ENCODE measurements at regions of chr15 and their contacts with region 1.

Region 1: DNA sequence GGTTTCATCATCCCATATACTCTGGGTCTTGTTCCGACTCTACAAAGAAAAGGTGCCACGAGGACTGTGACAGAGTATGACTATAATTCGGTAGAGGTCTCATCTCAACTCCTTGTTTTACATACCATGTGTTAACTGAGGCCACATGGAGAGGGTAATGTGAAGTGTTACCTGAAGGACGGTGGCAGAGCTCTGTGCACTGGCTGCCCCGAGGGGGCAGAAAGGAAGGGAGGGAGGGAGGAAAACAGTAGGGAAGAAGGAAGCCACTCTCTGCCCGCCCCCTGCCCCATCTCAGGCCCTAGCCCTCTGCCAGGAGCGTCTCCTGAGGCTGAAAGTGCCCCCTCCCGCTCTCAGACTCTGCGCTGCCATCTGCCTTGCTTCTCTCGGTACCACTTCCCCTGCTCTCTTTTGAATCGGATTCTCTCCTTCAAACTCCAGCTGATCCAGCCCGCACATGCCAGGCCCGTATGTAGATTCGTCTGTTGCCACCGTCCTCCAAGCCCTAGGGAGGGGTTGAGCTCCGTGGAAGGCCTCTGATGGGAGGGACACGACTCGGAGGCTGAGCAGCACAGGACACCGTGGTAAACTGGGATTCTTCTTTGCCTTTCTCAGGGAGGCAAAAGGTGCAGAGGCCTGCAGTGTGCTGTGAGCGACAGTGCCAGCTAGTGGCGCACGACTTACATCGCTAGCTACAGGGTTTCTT is 70.5 kb upstream of the ATP10A start:
- DNase-seq: peak; percentile 64 to 88 (median 77)
- H3K4me3 ChIP-seq: peak overlapping the region in 1 of 4 donors; percentile 46
- H3K27ac ChIP-seq: peak overlapping the region in 1 of 5 donors; percentile 65
- H3K4me1 ChIP-seq: peaks cover 3 to 4% of the 10 kb centered on the region in 2 donors
- H3K27me3 ChIP-seq: no peaks in the 10 kb centered on the region
- CTCF ChIP-seq: peak; percentile 43 to 87 (median 74)
- POLR2A ChIP-seq: no peak

Region 2: GRCh38 chr15:25693321-25694237 is 240.0 kb before region 1 on chr15:
- intact Hi-C with region 1: loop called in 1 of 2 experiments (anchors 5 kb)
- DNase-seq: peak in 3 of 7 donors; percentile 35 to 46 (median 39)
- H3K4me3 ChIP-seq: no peak overlapping the region
- H3K27ac ChIP-seq: peak overlapping the region in 1 of 5 donors; percentile 40
- H3K4me1 ChIP-seq: no peaks in the 10 kb centered on the region
- H3K27me3 ChIP-seq: no peaks in the 10 kb centered on the region
- CTCF ChIP-seq: peak; percentile 32 to 55 (median 48)
- POLR2A ChIP-seq: no peak

Region 3: DNA sequence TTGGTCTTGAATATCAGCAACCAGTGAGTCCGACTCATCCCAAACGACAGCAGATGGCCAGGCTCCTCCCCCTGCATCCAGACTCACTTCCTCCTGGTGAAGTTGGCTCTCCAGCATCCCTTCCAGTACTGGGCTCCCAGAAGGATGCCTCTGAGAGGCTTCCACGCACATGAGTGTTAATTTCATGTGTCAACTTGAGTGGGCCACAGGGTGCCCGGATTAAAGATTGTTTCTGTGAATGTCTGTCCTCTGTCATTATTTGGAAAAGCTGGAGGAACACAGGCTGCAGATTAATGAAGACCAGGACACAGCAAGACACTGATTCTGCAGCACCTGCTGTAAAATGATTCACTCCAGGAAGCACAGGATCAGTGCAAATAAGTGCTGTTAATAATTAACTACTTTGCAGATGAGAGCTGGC is 170.3 kb before region 1 on chr15:
- intact Hi-C with region 1: loop called in 1 of 2 experiments (anchors 10 kb)
- DNase-seq: peak in 1 of 7 donors; percentile 48
- H3K4me3 ChIP-seq: no peak overlapping the region
- H3K27ac ChIP-seq: no peak overlapping the region
- H3K4me1 ChIP-seq: no peaks in the 10 kb centered on the region
- H3K27me3 ChIP-seq: no peaks in the 10 kb centered on the region
- CTCF ChIP-seq: no peak
- POLR2A ChIP-seq: no peak

Region 4: GRCh38 chr15:25805031-25805430 is 128.6 kb before region 1 on chr15:
- intact Hi-C with region 1: no loop called
- DNase-seq: peak in 1 of 7 donors; percentile 10
- H3K4me3 ChIP-seq: no peak overlapping the region
- H3K27ac ChIP-seq: no peak overlapping the region
- H3K4me1 ChIP-seq: no peaks in the 10 kb centered on the region
- H3K27me3 ChIP-seq: no peaks in the 10 kb centered on the region
- CTCF ChIP-seq: no peak
- POLR2A ChIP-seq: no peak